AG04449 (cell line): ENCODE measurements at regions of chr14 and their contacts with region 1.

Region 1: DNA sequence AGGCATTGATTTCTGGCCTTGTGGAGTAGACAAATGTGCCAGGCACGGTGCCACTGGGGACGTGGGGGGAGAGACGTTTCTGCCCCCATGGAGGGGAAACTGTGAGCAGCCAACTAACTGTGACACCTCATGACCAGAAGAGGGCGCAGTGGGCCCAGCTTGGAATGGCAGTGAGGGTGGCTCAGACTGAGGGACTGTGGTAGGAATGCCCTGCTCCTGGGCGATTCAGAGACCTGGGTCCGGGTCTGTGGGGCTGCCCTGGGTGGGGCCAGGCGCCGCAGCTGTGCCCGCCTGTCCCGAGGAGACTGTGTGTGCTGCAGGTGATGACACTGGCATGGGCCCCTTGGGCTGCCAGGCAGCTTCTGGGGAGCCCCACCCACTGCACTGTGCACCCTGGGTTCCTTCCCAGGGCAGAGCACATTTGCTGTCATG is 60.6 kb downstream of the SLC25A47 start:
- DNase-seq: no peak
- H3K4me3 ChIP-seq: no peak overlapping the region
- CTCF ChIP-seq: peak; percentile 93

Region 2: GRCh38 chr14:100362311-100362927 is 21.3 kb before region 1 on chr14:
- CTCF ChIA-PET with region 1: interaction called, 21 read pairs
- POLR2A ChIA-PET with region 1: no interaction called
- DNase-seq: no peak
- H3K4me3 ChIP-seq: no peak overlapping the region
- CTCF ChIP-seq: no peak

Region 3: GRCh38 chr14:100406505-100407131 is 22.9 kb after region 1 on chr14:
- CTCF ChIA-PET with region 1: interaction called, 41 read pairs
- POLR2A ChIA-PET with region 1: no interaction called
- DNase-seq: no peak
- H3K4me3 ChIP-seq: no peak overlapping the region
- CTCF ChIP-seq: no peak

Region 4: GRCh38 chr14:100440187-100440631 is 56.5 kb after region 1 on chr14:
- CTCF ChIA-PET with region 1: interaction called, 15 read pairs
- POLR2A ChIA-PET with region 1: no interaction called
- DNase-seq: no peak
- H3K4me3 ChIP-seq: no peak overlapping the region
- CTCF ChIP-seq: peak; percentile 73

Region 5: DNA sequence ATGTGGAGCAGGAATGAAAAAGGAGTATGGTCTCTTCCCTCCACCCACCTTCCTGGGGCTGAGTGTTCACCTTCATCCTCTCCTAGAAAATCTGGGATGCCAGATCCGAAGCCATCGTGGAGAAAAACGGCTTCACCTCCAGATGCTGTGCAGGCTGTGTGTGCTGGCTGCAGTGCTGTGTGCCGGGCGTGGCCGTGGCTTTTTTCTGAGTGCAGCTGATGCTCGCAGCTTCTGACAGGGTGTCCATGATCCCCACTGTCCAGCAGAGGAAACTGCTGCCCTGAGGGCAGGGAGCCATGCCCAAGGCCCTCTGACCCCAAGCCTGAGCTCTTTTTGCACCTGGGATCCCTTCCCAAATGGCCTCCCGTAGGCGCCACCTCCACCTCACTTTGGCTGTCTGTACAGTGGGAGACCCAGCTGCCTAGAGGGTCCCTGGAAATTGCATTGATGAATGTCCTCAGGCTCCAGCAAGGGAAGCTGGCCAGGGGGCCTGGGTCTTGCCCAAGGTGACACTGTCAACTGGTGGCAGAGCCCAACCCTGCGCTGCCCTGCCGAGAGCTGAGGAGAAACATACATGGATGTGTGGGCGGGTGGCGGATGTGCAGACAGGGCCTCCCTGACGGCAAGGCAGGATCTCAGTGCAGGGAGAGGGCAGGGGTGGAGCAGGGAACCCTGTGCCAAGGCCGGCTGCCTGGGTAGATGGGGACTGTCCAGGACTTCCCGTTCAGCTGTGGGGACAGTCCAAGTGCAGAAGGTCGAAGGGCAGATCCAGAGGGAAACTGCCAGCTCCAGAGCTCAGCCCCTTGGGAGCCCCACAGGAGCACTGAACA is 150.1 kb after region 1 on chr14:
- CTCF ChIA-PET with region 1: interaction called, 10 read pairs
- POLR2A ChIA-PET with region 1: no interaction called
- DNase-seq: no peak
- H3K4me3 ChIP-seq: no peak overlapping the region
- CTCF ChIP-seq: no peak

Region 6: DNA sequence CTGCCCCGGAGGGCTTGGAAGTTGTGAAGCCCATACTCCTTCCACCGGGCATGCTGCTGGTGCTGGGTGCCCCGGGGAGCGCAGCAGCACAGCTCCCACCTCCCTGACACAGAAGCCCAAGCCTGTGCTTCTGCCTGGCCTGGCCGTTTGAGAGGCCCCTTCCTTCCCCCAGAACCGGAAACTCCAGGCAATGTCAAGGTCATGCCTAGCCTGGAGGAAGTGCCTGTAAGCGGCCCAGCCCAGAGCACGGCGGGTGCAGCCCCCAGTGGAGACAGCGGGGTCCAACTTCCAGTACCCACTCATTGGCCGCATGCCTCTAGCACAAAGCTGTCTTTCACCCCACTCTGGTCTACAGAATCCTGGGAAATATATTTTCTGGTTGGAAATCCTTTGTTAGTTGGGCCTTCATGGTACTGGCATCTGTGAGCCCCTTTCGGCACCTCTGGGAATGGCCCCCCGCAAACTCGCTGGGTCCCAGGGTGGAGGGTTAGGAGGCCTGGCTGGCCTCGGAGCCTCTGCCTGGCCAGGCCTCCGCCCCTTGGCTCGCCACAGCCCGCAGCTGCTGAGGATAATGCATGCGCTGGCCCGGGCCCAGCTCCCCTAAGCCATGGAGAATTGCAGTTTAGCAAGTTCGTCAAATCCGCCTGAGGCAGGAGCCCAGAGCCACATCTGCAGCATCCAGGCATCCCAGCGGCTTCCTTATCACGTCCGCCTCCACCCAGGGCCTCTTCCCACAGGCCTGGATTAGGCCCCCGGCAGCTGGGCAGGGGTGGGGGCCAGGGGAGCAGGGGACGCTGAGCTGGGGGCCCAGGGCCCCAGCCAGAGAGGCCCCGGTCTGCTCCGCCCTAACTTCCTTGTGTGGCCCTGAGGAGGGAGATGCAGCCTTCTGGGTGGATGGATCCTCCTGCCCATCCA is 294.1 kb after region 1 on chr14:
- CTCF ChIA-PET with region 1: interaction called, 14 read pairs
- POLR2A ChIA-PET with region 1: no interaction called
- DNase-seq: no peak
- H3K4me3 ChIP-seq: no peak overlapping the region
- CTCF ChIP-seq: no peak

Region 7: DNA sequence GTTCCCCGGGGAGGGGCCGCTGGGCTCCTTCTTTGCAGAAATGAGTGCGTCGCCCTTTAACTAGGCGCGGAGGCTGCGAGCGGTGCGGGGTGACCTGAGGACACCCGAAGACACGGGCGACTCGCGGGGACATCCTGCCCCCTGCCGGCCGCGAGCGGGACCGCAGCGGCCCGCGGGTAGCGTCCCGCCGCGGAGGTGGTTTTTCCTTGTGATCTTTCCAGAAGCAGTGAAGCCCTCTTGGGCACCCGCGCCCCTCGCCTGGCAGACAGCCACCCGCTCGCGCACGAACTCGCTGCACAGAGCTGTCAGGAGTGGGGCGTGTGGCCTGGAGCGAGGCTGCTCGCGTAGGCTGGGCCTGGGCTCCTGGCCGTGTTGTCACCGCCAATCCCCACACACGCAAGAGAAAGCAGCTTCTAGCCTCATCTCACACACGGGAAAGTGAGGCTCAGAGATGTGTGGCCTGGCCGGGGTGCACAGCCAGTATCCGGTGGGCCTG is 1244.8 kb after region 1 on chr14:
- CTCF ChIA-PET with region 1: interaction called, 55 read pairs
- POLR2A ChIA-PET with region 1: no interaction called
- DNase-seq: no peak
- H3K4me3 ChIP-seq: peak overlapping the region; percentile 38
- CTCF ChIP-seq: peak; percentile 90